Heart left ventricle (tissue), 16 donors: ENCODE measurements at regions of chr4 and their contacts with region 1.

Region 1: DNA sequence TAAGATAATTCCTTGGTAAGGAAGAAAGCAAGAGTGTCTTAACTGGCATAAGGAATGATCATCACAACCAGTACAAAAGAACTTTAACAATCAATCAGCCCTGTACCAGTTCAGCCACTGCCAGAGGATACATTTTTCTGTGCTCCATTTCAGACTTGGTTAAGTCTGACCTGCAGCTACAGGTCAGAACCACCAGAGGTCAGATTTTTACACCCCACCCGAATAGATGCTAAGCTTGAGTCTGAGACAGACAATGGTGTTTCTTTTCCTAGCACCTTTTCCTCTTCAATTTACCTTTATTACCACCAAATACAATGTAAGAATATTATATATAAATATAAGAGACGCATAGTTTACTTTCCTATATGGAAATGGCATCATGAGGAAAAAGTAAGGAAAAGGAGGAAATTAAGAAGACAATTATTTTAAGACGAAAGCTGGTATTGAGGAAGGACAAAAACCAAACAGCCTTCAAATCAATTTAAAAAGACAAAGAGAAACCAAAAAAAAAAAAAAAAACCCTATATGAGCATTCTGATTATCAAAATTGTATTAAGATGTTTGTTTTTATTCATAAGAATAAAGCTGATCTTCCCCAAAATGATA is 215.3 kb upstream of the TTC29 start:
- DNase-seq: no peak
- ATAC-seq: peak; percentile 15 to 82 (median 71)
- H3K4me3 ChIP-seq: no peak overlapping the region
- H3K27ac ChIP-seq: no peak overlapping the region
- H3K4me1 ChIP-seq: peaks cover 0 to 17% (median 0%) of the 10 kb centered on the region in 12 donors
- H3K27me3 ChIP-seq: peaks cover 0 to 4% (median 0%) of the 10 kb centered on the region in 9 donors
- CTCF ChIP-seq: peak; percentile 59 to 85 (median 74)
- POLR2A ChIP-seq: no peak

Region 2: DNA sequence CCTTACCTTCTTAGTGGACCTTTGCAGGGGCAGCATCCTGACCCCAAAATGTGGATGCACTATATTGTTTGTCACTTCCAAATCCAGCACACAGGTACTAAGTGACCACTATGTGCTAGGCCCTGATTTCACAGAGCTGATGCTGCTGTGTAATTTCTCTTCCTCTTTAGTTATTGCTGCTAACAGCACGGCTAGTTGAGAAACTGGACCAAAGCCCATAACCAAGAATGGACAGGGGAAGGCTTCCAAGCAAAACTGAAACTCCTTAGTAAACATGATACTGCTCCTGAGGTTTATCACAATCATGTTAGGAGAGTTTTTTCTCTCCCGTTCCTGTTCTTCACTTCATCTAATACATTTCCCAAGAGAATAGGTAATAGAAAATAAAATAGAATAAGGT is 42.5 kb before region 1 on chr4:
- intact Hi-C with region 1: loop called in 1 of 10 experiments (anchors 5 kb)
- DNase-seq: peak in 1 of 5 donors; percentile 35
- ATAC-seq: peak; percentile 65 to 76 (median 72)
- H3K4me3 ChIP-seq: no peak overlapping the region
- H3K27ac ChIP-seq: peak overlapping the region in 5 of 12 donors; percentile 14 to 52 (median 42)
- H3K4me1 ChIP-seq: peaks cover 0 to 41% (median 18%) of the 10 kb centered on the region in 12 donors
- H3K27me3 ChIP-seq: no peaks in the 10 kb centered on the region
- CTCF ChIP-seq: no peak
- POLR2A ChIP-seq: no peak

Region 3: GRCh38 chr4:147312376-147313046 is 151.5 kb after region 1 on chr4:
- intact Hi-C with region 1: loop called in 1 of 10 experiments (anchors 10 kb)
- DNase-seq: no peak
- ATAC-seq: no peak
- H3K4me3 ChIP-seq: no peak overlapping the region
- H3K27ac ChIP-seq: no peak overlapping the region
- H3K4me1 ChIP-seq: no peaks in the 10 kb centered on the region
- H3K27me3 ChIP-seq: no peaks in the 10 kb centered on the region
- CTCF ChIP-seq: no peak
- POLR2A ChIP-seq: no peak

Region 4: DNA sequence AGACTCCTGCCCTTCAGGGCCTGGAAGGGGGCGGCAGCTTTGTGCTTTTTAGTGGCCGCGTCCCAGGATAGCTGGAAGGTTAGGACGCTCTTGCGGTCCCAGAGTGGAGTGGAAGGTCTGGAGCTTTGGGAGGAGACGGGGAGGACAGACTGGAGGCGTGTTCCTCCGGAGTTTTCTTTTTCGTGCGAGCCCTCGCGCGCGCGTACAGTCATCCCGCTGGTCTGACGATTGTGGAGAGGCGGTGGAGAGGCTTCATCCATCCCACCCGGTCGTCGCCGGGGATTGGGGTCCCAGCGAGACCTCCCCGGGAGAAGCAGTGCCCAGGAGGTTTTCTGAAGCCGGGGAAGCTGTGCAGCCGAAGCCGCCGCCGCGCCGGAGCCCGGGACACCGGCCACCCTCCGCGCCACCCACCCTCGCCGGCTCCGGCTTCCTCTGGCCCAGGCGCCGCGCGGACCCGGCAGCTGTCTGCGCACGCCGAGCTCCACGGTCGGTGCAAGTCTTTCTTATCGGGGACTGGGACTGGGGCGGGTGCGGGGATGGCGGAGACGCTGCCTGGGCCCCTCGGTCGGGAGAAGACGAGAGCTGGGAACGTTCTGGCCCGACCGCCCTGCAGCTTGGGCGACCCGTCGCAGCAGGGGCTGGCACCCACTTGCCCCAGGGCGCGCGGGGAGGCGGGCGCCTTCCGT is 320.0 kb after region 1 on chr4 and contains the start of gene EDNRA:
- intact Hi-C with region 1: loop called in 1 of 10 experiments (anchors 10 kb)
- DNase-seq: peak; percentile 48 to 68 (median 58)
- ATAC-seq: peak; percentile 34 to 86 (median 76)
- H3K4me3 ChIP-seq: peak within 1 kb of the TSS; percentile 49 to 82 (median 65)
- H3K27ac ChIP-seq: peak within 1 kb of the TSS; percentile 71 to 93 (median 84)
- H3K4me1 ChIP-seq: peaks cover 0 to 34% (median 6%) of the 10 kb centered on the region in 12 donors
- H3K27me3 ChIP-seq: peaks cover 0 to 20% (median 0%) of the 10 kb centered on the region in 9 donors
- CTCF ChIP-seq: no peak
- POLR2A ChIP-seq: no peak
- total RNA-seq, gene EDNRA: 6.8 to 39.0 (median 16.3) TPM

Region 5: GRCh38 chr4:147518846-147519767 is 358.1 kb after region 1 on chr4:
- intact Hi-C with region 1: loop called in 1 of 10 experiments (anchors 10 kb)
- DNase-seq: peak in 3 of 5 donors; percentile 25 to 45 (median 32)
- ATAC-seq: peak in 2 of 4 donors; percentile 50 to 62
- H3K4me3 ChIP-seq: no peak overlapping the region
- H3K27ac ChIP-seq: no peak overlapping the region
- H3K4me1 ChIP-seq: peaks cover 0 to 28% (median 4%) of the 10 kb centered on the region in 12 donors
- H3K27me3 ChIP-seq: no peaks in the 10 kb centered on the region
- CTCF ChIP-seq: peak; percentile 52 to 80 (median 65)
- POLR2A ChIP-seq: no peak

Region 6: DNA sequence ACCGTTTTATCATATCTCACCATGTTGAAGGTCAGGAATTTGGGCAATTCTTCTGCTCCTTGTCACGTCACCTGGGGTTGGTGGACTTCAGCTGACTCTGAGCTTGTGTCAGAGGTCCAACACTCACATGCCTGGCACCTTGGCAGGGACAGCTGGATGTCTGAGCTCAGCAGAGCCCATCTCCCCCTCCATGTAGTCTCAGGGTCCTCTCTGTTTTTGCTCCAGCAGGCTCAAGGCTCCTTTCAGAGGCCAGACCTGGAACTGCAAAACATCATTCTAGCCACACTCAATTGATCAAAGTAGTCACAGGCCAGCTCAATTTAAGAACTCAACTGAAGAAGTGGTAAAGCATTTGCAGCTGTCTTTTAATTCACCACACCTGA is 365.3 kb after region 1 on chr4:
- intact Hi-C with region 1: loop called in 1 of 10 experiments (anchors 5 kb)
- DNase-seq: peak in 2 of 5 donors; percentile 38 to 49
- ATAC-seq: peak; percentile 74 to 86 (median 81)
- H3K4me3 ChIP-seq: no peak overlapping the region
- H3K27ac ChIP-seq: peak overlapping the region in 4 of 12 donors; percentile 9 to 37 (median 20)
- H3K4me1 ChIP-seq: peaks cover 0 to 21% (median 7%) of the 10 kb centered on the region in 12 donors
- H3K27me3 ChIP-seq: no peaks in the 10 kb centered on the region
- CTCF ChIP-seq: peak in 7 of 12 donors; percentile 7 to 48 (median 17)
- POLR2A ChIP-seq: no peak